ENCODE measurements at regions of chr20 and their contacts with region 1.

Region 1: GRCh38 chr20:46757754-46758678 is 48.6 kb downstream of the SLC2A10 start:
- DNase-seq: no peak

Region 2: DNA sequence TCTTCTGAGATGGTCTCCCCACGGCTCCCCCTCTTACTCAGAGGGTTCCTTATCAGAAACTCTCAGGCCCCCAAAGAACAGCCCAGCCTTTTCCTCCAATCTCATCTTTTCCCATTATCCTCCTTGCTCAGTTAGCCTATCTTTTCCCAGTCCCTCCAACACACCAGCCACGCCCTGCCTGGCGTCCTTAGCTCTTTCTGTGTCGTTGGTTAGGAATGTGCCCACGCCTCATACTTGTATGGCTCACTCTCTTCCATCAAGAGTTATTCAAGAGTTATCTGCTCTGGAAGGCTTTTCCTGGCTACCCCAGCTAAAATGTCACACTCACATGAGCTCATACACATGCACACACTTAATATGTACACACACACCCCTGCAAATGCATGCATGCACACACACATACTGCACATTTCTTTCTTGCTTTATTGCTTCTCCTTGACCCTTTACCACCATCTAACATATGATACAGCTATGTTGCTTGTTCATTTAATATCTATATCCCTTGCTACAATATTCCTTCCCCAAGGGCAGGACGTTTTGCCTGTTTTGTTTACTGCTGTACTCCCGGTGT is 11.0 kb before region 1 on chr20:
- intact Hi-C with region 1: no loop called
- DNase-seq: peak; percentile 87

Region 3: DNA sequence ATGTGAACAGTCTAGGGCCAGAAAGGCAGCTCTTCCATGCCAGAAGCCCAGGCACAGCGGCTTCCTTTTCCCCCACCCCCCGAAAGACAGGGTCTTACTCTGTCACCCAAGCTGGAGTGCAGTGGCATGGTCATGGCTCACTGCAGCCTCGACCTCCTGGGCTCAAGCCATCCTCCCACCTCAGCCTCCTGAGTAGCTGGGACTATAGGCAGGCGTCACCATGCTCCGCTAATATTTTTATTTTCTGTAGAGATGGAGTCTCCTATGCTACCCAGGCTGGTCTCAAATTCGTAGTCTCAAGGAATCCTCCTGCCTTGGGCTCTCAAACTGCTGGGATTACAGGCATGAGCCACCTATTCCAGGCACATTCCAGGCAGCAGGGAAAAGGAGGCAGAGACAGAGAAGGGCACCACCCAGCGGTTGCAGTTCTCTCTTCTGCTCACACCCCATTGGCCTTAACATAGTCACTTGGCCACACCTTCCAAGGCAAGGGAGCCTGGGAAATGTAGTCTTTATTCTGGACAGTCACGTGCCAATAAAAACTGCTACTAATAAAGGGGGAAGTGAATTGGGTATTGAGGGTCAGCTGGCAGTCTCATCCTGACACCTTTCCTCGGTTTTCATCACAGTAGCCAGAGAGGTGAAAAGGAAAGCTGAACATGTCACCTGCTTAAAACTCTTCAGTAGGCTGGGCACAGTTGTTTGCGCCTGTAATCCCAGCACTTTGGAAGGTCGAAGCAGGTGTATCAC is 392.6 kb after region 1 on chr20:
- intact Hi-C with region 1: loop called (anchors 5 kb)
- DNase-seq: peak; percentile 90

Region 4: DNA sequence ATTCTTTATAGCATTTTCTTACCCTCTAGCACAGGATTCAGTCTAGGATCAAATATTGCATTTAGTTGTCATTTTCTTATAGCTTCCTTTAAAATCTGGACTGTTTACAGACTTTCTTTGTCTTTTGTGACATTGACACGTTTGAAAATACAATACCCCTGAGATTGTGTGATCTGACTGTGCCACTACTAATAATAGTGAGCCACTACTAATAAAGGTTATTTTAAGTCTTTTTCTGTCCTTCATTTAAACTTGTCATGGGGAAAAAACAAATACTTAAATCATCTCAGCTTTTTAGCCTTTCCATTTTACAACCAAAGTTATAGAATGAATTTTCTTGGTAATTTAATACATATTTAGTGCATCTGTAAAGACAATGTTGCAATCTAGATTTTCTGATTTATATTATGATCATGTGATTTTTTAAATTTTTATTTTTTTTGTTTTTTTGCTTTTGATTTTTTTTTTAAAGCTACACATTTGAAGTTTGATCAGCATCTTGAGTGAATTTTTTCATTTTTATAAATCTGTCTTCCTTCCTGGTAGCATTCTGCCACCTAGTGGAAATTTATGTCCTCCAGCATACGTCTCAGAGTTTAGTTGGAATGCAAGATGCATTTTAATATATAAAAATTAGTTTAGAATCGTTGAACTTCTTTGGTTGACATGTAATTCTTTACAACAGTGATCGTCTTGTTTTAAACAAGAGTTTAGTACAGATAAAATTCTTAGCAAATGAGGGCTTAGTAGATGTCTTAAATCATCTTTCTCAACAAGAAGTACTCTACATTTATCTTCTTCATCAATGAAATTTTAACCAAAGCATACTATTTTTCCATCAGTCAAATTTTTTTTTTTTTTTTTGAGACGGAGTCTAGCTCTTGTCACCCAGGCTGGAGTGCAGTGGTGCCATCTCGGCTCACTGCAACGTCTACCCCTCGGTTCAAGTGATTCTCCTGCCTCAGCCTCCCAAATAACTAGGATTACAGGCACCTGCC is 863.1 kb after region 1 on chr20:
- intact Hi-C with region 1: loop called in 1 of 2 experiments (anchors 10 kb)
- DNase-seq: no peak